ENCODE measurements at regions of chr21 and their contacts with region 1.

Region 1: GRCh38 chr21:30847627-30848500 is 18.3 kb upstream of the KRTAP7-1 start:
- DNase-seq: no peak
- H3K4me3 ChIP-seq: no peak overlapping the region
- H3K27ac ChIP-seq: no peak overlapping the region
- H3K4me1 ChIP-seq: no peaks in the 10 kb centered on the region
- H3K27me3 ChIP-seq: no peaks in the 10 kb centered on the region
- CTCF ChIP-seq: no peak
- POLR2A ChIP-seq: no peak

Region 2: GRCh38 chr21:30674312-30674711 is 173.6 kb before region 1 on chr21:
- intact Hi-C with region 1: no loop called
- DNase-seq: no peak
- H3K4me3 ChIP-seq: no peak overlapping the region
- H3K27ac ChIP-seq: no peak overlapping the region
- H3K4me1 ChIP-seq: no peaks in the 10 kb centered on the region
- H3K27me3 ChIP-seq: no peaks in the 10 kb centered on the region
- CTCF ChIP-seq: no peak
- POLR2A ChIP-seq: no peak

Region 3: DNA sequence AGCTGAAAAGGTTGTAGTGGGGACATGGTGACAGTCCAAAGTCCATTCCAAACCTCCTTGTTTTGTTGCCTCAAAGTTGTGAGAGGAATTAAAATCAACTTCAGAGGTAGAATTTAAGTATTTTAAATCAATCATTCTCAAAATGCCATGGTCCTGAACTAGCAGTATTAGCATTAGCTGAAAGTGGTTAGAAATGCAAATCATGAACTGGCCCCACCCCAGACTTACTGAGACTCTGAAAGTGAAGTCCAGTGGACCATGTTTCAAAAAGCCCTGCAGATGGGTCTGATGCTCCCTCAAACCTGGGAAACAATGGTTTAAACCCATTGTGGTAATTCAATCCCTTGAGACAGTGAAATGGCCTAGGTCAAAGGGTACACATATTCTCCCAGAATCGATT is 69.7 kb after region 1 on chr21:
- intact Hi-C with region 1: loop called (anchors 2 kb)
- DNase-seq: no peak
- H3K4me3 ChIP-seq: no peak overlapping the region
- H3K27ac ChIP-seq: no peak overlapping the region
- H3K4me1 ChIP-seq: no peaks in the 10 kb centered on the region
- H3K27me3 ChIP-seq: no peaks in the 10 kb centered on the region
- CTCF ChIP-seq: no peak
- POLR2A ChIP-seq: no peak